Sigmoid colon (tissue), 7 donors: ENCODE measurements at regions of chr7 and their contacts with region 1.

Region 1: GRCh38 chr7:112414855-112415490 is 35.3 kb upstream of the IFRD1 start:
- DNase-seq: no peak
- H3K4me3 ChIP-seq: no peak overlapping the region
- H3K27ac ChIP-seq: no peak overlapping the region
- H3K4me1 ChIP-seq: peaks cover 0 to 13% (median 3%) of the 10 kb centered on the region in 4 donors
- H3K27me3 ChIP-seq: no peaks in the 10 kb centered on the region
- CTCF ChIP-seq: peak in 2 of 4 experiments; percentile 28 to 34
- EP300 ChIP-seq: no peak
- POLR2A ChIP-seq: no peak

Region 2: GRCh38 chr7:111763221-111763801 is 651.7 kb before region 1 on chr7:
- intact Hi-C with region 1: loop called (anchors 10 kb)
- DNase-seq: no peak
- H3K4me3 ChIP-seq: no peak overlapping the region
- H3K27ac ChIP-seq: no peak overlapping the region
- H3K4me1 ChIP-seq: peaks cover 0 to 16% (median 3%) of the 10 kb centered on the region in 4 donors
- H3K27me3 ChIP-seq: no peaks in the 10 kb centered on the region
- CTCF ChIP-seq: peak in 3 of 4 experiments; percentile 28 to 58 (median 29)
- EP300 ChIP-seq: no peak
- POLR2A ChIP-seq: no peak

Region 3: DNA sequence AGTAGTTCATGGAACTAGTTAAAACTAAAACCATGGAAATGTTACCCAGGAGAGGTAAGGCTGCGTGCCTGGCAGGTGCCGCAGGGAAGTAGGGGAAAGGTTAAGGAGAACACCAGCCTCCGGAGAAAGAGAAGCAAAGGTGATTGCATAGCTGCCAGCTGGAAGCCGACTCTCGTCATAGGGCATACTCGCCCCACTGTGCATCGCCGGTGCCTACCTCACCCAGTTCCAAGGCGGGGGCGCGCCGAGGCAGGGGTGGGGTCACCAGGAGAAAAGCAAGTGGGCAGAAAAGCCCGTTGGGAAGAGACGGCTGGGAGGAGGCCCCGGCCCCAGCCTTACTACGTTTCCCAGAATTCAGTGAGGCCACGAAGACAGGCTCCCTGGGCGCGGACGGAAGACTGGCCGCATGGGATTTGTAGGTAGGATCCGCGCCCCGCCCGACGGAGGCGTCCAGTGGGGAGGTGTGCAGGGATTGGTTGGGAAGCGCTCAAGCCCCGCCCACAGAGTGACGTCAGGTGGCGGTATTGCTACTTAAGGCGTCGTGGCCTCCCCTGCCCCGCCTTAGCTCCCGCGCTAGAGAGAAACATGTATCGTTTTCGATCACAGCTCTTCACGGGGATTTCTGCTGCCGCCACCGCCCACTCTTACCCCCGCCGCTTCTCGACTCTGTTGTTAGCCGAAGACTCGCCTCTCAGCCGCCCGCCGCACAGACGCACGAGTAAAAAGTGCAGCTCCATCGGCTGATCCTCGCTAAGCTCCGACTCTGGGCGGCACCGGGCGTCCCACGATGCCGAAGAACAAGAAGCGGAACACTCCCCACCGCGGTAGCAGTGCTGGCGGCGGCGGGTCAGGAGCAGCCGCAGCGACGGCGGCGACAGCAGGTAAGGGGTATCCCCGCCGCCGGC is 35.2 kb after region 1 on chr7 and contains the start of gene IFRD1:
- intact Hi-C with region 1: no loop called
- DNase-seq: peak; percentile 100
- H3K4me3 ChIP-seq: peak within 1 kb of the TSS; percentile 78 to 100 (median 97)
- H3K27ac ChIP-seq: peak within 1 kb of the TSS; percentile 94 to 100 (median 100)
- H3K4me1 ChIP-seq: peaks cover 0 to 45% (median 37%) of the 10 kb centered on the region in 4 donors
- H3K27me3 ChIP-seq: no peaks in the 10 kb centered on the region
- CTCF ChIP-seq: no peak
- EP300 ChIP-seq: peak in 1 of 4 donors; percentile 20
- POLR2A ChIP-seq: peak; percentile 99
- total RNA-seq, gene IFRD1: 45.7 to 63.7 (median 49.7) TPM